Caco-2 (cell line): ENCODE measurements at regions of chr18 and their contacts with region 1.

Region 1: GRCh38 chr18:59988098-59988706 is 88.4 kb downstream of the PMAIP1 start:
- DNase-seq: peak in 1 of 2 experiments; percentile 3
- H3K4me3 ChIP-seq: no peak overlapping the region
- H3K4me3 Mint-ChIP-seq: no peak overlapping the region
- H3K27ac Mint-ChIP-seq: no peak overlapping the region
- H3K4me1 ChIP-seq: no peaks in the 10 kb centered on the region
- H3K4me1 Mint-ChIP-seq: no peaks in the 10 kb centered on the region
- H3K27me3 ChIP-seq: no peaks in the 10 kb centered on the region
- H3K27me3 Mint-ChIP-seq: peaks cover 2% of the 10 kb centered on the region
- CTCF ChIP-seq: peak; percentile 59 to 66

Region 2: DNA sequence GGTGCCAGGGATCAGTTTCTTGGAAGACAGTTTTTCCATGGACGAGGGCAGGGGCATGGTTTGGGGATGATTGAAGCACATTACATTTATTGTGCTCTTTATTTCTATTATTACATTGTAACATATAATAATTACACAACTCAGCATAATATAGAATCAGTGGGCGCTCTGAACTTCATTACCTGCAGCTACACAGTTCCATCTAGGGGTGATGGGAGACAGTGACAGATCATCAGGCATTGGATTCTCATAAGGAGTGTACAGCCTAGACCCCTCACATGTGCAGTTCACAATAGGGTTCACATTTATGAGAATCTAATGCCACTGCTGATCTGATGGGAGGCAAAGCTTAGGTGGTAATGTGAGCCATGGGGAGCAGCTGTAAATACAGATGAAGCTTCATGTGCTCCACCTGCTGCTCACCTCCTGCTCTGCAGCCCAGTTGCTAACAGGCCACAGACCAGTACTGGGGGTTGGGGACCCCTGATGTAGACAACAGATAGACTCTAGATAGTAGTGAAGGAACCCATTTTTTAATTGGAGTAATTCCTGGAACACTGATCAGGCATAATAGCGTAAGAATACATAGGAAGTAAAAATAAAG is 425.8 kb after region 1 on chr18:
- CTCF ChIA-PET with region 1: interaction called, 8 read pairs
- POLR2A ChIA-PET with region 1: no interaction called
- intact Hi-C with region 1: loop called (anchors 1 kb)
- DNase-seq: peak; percentile 9 to 19
- H3K4me3 ChIP-seq: no peak overlapping the region
- H3K4me3 Mint-ChIP-seq: no peak overlapping the region
- H3K27ac Mint-ChIP-seq: no peak overlapping the region
- H3K4me1 ChIP-seq: no peaks in the 10 kb centered on the region
- H3K4me1 Mint-ChIP-seq: no peaks in the 10 kb centered on the region
- H3K27me3 ChIP-seq: no peaks in the 10 kb centered on the region
- H3K27me3 Mint-ChIP-seq: no peaks in the 10 kb centered on the region
- CTCF ChIP-seq: peak; percentile 35 to 41